ENCODE measurements at regions of chr1 and their contacts with region 1.

Region 1: GRCh38 chr1:180527101-180527669 is 24.8 kb upstream of the ACBD6 start:
- DNase-seq: no peak
- H3K4me3 ChIP-seq: no peak overlapping the region
- H3K27ac ChIP-seq: no peak overlapping the region
- H3K4me1 ChIP-seq: no peaks in the 10 kb centered on the region
- H3K27me3 ChIP-seq: no peaks in the 10 kb centered on the region
- CTCF ChIP-seq: no peak
- EP300 ChIP-seq: no peak
- POLR2A ChIP-seq: no peak

Region 2: GRCh38 chr1:180462102-180462501 is 65.1 kb before region 1 on chr1:
- intact Hi-C with region 1: no loop called
- DNase-seq: no peak
- H3K4me3 ChIP-seq: no peak overlapping the region
- H3K27ac ChIP-seq: no peak overlapping the region
- H3K4me1 ChIP-seq: no peaks in the 10 kb centered on the region
- H3K27me3 ChIP-seq: no peaks in the 10 kb centered on the region
- CTCF ChIP-seq: no peak
- EP300 ChIP-seq: no peak
- POLR2A ChIP-seq: no peak

Region 3: GRCh38 chr1:180842052-180842451 is 314.9 kb after region 1 on chr1:
- intact Hi-C with region 1: no loop called
- DNase-seq: no peak
- H3K4me3 ChIP-seq: no peak overlapping the region
- H3K27ac ChIP-seq: no peak overlapping the region
- H3K4me1 ChIP-seq: peaks cover 3% of the 10 kb centered on the region
- H3K27me3 ChIP-seq: no peaks in the 10 kb centered on the region
- CTCF ChIP-seq: no peak
- EP300 ChIP-seq: no peak
- POLR2A ChIP-seq: no peak

Region 4: DNA sequence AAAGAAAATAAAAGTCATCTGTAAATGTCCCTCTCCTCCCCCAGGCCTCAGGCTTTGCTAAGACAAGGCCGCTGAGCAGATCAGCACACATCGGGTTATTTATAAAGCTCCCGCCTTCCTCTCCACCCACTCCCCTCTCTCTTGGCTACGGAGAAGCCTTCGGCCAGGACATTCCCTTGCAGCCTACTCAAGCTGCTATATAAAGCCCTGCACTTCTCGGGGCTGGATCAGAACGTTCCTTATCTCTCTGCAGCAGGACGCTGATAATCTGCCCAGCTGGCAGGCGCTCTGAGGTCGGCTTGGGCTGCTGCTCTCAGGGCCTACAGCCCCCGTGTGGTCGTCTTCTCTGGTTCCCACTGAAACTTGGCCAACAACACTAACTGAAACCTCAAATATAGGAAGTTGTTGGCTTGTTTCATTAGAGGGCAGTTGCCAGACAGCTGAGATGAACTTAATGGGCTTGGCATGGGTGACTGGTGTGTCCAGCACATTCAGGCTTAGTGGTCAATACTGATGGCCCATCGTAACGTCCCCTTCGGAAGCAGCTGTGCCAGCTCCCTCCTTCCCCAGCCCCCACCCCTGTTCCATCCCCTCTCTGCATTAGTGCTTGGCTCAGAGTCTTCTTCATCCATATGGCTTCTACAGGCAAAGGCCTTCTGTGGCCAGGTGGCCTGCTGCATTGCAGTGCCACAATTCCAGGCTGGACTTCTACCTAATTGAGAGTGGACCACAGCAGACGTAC is 625.9 kb after region 1 on chr1:
- intact Hi-C with region 1: loop called in 1 of 4 experiments (anchors 10 kb)
- DNase-seq: peak; percentile 79 to 93 (median 87)
- H3K4me3 ChIP-seq: no peak overlapping the region
- H3K27ac ChIP-seq: peak overlapping the region; percentile 15 to 63
- H3K4me1 ChIP-seq: peaks cover 9% of the 10 kb centered on the region
- H3K27me3 ChIP-seq: no peaks in the 10 kb centered on the region
- CTCF ChIP-seq: peak; percentile 18 to 33 (median 22)
- EP300 ChIP-seq: peak; percentile 64
- POLR2A ChIP-seq: peak; percentile 22

Region 5: GRCh38 chr1:181166377-181167196 is 639.4 kb after region 1 on chr1:
- intact Hi-C with region 1: loop called in 3 of 4 experiments (anchors 10 kb)
- DNase-seq: peak; percentile 55 to 74 (median 58)
- H3K4me3 ChIP-seq: no peak overlapping the region
- H3K27ac ChIP-seq: no peak overlapping the region
- H3K4me1 ChIP-seq: no peaks in the 10 kb centered on the region
- H3K27me3 ChIP-seq: no peaks in the 10 kb centered on the region
- CTCF ChIP-seq: peak; percentile 50 to 82 (median 68)
- EP300 ChIP-seq: no peak
- POLR2A ChIP-seq: no peak

Region 6: DNA sequence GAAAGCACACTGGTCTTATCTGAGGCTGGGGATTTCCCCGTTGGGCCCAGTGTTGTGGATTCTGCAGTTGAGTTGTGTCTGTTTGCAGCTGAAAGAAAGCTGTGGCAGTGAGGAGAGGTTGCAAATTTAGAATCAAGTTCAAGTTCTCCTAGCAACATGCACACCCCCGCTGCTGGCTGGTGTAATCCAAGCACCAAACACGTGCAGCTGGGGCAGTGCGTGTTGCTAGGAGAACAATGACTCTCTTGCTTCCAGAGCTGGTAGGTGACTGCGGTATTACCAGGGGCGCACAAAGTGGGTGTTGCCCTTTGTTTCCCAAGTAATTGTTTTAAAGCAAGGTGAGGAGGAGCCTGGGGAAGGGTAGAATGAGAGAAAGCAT is 652.8 kb after region 1 on chr1:
- intact Hi-C with region 1: loop called in 1 of 4 experiments (anchors 10 kb)
- DNase-seq: peak; percentile 47 to 71 (median 56)
- H3K4me3 ChIP-seq: no peak overlapping the region
- H3K27ac ChIP-seq: no peak overlapping the region
- H3K4me1 ChIP-seq: peaks cover 3% of the 10 kb centered on the region
- H3K27me3 ChIP-seq: no peaks in the 10 kb centered on the region
- CTCF ChIP-seq: no peak
- EP300 ChIP-seq: no peak
- POLR2A ChIP-seq: no peak